Posterior vena cava (tissue), 2 donors: ENCODE measurements at regions of chrX and their contacts with region 1.

Region 1: GRCh38 chrX:39972340-39972739 is 125.4 kb downstream of the BCOR start:
- DNase-seq: peak; percentile 23

Region 2: GRCh38 chrX:39381422-39381821 is 590.9 kb before region 1 on chrX:
- intact Hi-C with region 1: no loop called
- DNase-seq: no peak

Region 3: DNA sequence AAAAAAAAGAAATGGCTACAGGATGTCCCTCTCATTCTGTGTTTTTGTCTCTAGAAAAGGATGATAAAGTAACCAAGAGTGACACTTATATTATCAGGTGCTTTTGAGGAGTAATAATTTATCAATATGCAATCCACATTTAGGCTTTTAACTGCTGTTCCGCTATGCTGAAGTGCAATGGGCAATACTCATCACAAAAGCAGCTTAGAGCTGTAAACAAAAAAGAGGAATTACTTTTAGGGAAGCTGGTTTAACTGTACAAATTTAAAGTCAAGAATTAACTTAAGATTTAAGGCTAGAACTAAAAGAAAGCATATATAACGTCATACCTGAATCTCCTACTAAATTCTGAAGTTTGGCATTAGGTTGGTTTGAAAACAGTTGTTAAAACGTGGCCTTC is 1268.2 kb after region 1 on chrX:
- intact Hi-C with region 1: loop called in 1 of 2 experiments (anchors 5 kb)
- DNase-seq: no peak